Breast epithelium (tissue), 4 donors: ENCODE measurements at regions of chr10 and their contacts with region 1.

Region 1: GRCh38 chr10:70227548-70228320 is 5.5 kb downstream of the PPA1 start:
- DNase-seq: no peak
- H3K4me3 ChIP-seq: no peak overlapping the region
- H3K27ac ChIP-seq: peak overlapping the region; percentile 62 to 79
- H3K4me1 ChIP-seq: peaks cover 0 to 6% of the 10 kb centered on the region in 2 donors
- H3K27me3 ChIP-seq: no peaks in the 10 kb centered on the region
- CTCF ChIP-seq: no peak
- POLR2A ChIP-seq: no peak

Region 2: GRCh38 chr10:70198696-70199466 is 28.9 kb before region 1 on chr10:
- intact Hi-C with region 1: no loop called
- DNase-seq: no peak
- H3K4me3 ChIP-seq: no peak overlapping the region
- H3K27ac ChIP-seq: no peak overlapping the region
- H3K4me1 ChIP-seq: no peaks in the 10 kb centered on the region
- H3K27me3 ChIP-seq: no peaks in the 10 kb centered on the region
- CTCF ChIP-seq: no peak
- POLR2A ChIP-seq: no peak

Region 3: GRCh38 chr10:70283445-70284399 is 56.0 kb after region 1 on chr10 and contains the start of gene NPFFR1:
- intact Hi-C with region 1: loop called (anchors 10 kb)
- DNase-seq: no peak
- H3K4me3 ChIP-seq: peak within 1 kb of the TSS; percentile 8 to 63 (median 46)
- H3K27ac ChIP-seq: no peak within 1 kb of the TSS
- H3K4me1 ChIP-seq: no peaks in the 10 kb centered on the region
- H3K27me3 ChIP-seq: peaks cover 7% of the 10 kb centered on the region in 2 donors
- CTCF ChIP-seq: no peak
- POLR2A ChIP-seq: no peak
- total RNA-seq, gene NPFFR1: 0.44 TPM in 1 of 3 donors, not detected in the others

Region 4: DNA sequence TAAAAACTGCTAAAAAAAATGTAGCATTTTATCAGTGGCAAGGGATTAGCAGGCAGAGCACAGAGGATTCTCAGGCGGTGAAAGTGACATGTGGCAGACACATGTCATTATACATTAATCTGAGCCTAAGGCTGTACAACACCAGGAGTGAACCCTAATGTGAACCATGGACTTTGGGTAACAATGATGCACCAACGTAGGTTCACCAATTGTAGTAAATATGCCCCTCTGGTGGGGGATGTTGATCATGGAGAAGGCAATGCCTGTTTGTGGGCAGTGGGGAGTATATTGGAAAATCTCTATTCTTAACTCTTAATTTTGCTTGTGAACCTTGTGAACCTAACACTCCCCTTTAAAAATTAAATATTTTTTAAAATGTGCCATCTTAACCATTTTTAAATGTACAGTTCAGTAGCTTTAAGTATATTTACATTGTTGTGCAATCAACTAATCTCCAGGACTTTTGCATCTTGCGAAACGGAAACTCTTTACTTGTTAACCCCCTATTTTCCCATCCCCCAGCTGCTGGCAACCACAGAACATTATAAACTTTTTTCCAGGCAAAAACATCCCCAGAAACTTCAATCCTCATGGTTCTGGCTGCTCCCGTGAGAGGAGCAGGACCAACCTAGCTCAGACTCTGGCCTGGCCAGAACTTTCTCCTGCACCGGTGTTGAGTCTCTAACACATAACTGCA is 124.8 kb after region 1 on chr10:
- intact Hi-C with region 1: no loop called
- DNase-seq: no peak
- H3K4me3 ChIP-seq: no peak overlapping the region
- H3K27ac ChIP-seq: no peak overlapping the region
- H3K4me1 ChIP-seq: no peaks in the 10 kb centered on the region
- H3K27me3 ChIP-seq: no peaks in the 10 kb centered on the region
- CTCF ChIP-seq: no peak
- POLR2A ChIP-seq: no peak

Region 5: DNA sequence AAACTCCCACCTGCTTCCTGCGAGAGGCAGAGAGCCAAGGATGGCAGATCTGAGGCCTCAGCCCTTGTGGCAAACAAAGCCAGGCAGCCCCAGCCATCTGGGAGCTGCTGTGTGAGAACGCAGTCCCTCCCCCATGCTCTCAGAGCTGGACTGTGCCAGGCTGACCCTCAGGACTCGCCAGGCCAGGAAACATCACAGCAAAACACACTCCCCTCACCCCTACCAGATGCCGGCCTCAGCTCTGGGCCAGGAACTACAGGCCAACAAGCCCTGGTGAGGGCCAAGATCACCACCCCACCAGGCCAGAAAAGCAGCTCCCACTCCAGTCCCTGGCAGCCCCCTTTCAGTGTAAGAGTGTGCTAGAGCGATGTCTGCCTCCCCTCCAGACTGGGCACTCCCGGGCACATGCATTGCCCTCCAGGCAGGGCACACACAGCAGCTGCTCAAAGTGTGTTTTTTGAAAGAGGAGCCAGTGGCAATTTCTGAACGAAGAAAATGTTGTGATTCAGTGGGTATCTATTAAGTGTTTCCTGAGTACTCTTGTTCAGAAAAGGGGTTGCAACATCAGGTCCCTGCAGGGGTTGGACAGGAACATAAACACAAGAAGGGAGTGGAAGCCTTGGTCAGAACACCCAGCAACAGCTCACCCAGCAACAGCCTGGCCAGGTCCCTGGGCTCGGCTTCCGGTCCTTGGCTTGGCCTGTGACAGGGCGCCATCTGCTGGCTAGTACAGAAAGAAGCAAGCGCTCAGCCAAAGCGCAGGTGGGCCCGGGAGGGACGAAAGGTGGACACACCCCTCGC is 136.4 kb after region 1 on chr10:
- intact Hi-C with region 1: loop called (anchors 10 kb)
- DNase-seq: peak; percentile 93 to 94
- H3K4me3 ChIP-seq: peak overlapping the region; percentile 6 to 51 (median 13)
- H3K27ac ChIP-seq: peak overlapping the region; percentile 95 to 98
- H3K4me1 ChIP-seq: peaks cover 5% of the 10 kb centered on the region in 2 donors
- H3K27me3 ChIP-seq: no peaks in the 10 kb centered on the region
- CTCF ChIP-seq: peak; percentile 84 to 96 (median 94)
- POLR2A ChIP-seq: no peak